Left cardiac atrium (tissue), 4 donors: ENCODE measurements at regions of chr21 and their contacts with region 1.

Region 1: DNA sequence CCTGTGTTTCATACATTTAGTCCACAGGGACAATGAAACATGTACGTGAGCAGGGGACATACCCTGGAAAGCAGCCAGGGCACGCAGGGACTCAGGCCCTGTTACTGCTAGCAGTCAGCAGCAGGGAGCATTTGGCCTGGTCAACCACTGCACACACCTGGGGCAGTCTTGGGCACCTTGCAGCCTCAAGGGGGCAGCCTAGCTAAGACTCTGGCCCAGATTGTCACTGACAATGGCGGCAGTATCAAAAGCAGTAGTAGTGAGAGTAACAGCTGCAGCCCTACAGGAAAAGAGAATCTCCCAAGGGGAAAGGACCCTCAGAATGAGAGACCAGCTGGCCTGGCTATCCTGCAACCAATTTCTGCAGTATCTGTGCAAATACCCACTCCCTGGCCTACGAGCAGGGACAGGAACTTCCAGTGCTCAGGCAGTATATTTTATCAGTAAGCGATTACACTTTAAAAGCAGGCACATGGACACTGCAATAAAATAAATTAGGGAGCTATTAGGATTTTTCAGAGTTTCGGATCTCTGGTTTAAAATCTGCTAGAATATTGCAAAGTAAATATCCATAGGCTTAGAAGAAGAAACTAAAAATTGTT is 475.6 kb downstream of the LTN1 start:
- DNase-seq: peak; percentile 68
- ATAC-seq: peak; percentile 92

Region 2: GRCh38 chr21:28442624-28443023 is 74.5 kb before region 1 on chr21:
- intact Hi-C with region 1: no loop called
- DNase-seq: no peak
- ATAC-seq: no peak

Region 3: GRCh38 chr21:28587748-28588147 is 70.7 kb after region 1 on chr21:
- intact Hi-C with region 1: no loop called
- DNase-seq: no peak
- ATAC-seq: no peak

Region 4: DNA sequence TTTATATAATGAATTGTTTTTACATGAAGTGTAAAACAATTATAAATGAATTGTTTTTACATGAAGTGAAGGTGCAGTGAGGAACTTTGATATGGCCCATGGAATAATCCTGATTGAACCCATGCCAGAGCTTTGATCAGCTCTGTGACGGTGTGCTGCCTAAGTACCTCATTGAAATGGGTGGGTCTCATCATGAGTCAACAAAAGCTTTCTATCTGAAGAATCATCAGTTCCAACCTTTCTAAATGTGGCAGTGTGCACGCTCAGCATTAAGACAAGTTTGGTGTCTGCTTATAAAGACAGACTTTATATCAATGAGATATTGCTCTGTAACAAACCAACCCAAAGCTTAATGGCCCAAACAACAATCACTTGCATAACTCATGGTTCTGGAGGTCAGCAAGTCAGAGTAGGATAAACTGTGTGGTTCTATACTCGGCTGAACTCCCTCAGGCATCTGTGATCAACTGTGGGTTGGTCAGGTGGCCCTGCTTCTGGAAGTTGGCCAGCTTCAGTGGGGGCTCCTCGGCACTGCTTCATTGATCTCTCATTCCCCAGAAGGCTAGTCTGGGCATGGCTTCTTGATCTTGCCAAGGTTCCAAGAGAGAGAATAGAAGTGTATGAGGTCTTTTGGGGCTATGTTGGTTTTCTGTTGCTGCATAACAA is 217.6 kb after region 1 on chr21:
- intact Hi-C with region 1: loop called in 1 of 2 experiments (anchors 5 kb)
- DNase-seq: no peak
- ATAC-seq: no peak